ENCODE measurements at regions of chr3 and their contacts with region 1.

Region 1: DNA sequence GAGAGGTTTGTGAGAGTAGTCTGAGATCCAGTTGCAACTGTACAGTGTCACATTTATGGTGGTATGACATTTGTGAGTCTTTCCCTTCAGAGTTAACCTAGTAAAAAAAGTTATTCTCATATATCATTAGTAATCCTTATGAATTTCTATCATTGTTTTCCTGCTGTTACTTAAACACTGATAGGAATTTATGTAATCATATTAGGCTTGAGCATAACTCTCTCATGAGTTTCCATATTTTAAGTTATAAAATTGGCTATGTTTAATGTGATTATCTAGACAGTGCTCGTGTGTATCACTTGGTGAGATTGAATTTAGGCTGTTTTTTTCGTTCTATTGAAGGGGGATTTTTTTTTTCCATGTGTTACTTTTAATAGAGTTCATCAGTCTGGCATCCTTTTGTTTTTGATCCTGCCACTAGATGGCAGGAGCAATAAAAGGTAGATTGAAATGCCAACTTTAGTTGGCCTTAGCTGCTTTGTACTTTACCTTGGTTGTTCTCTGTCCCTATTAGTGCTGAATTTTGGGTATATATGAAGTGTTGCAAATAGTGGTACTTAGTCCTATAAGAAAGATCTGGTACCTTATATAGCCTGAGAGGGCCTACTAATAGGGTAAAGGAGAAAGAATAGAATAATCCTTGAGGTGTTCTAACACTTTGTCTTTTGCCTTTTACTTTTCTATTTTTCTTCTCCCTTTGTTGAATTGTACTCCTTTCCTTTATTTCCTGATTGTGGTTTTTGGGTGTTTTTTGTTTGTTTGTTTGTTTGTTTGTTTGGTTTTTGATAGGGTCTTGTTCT is 17.9 kb downstream of the STT3B start:
- DNase-seq: peak; percentile 35
- ATAC-seq: peak; percentile 73
- H3K4me3 Mint-ChIP-seq: no peak overlapping the region
- H3K27ac Mint-ChIP-seq: peak overlapping the region; percentile 46
- H3K4me1 Mint-ChIP-seq: peaks cover 74% of the 10 kb centered on the region
- H3K27me3 Mint-ChIP-seq: no peaks in the 10 kb centered on the region
- CTCF ChIP-seq: peak; percentile 87

Region 2: GRCh38 chr3:31495971-31496665 is 54.5 kb before region 1 on chr3:
- CTCF ChIA-PET with region 1: no interaction called
- POLR2A ChIA-PET with region 1: no interaction called
- intact Hi-C with region 1: no loop called
- DNase-seq: no peak
- ATAC-seq: no peak
- H3K4me3 Mint-ChIP-seq: no peak overlapping the region
- H3K27ac Mint-ChIP-seq: no peak overlapping the region
- H3K4me1 Mint-ChIP-seq: no peaks in the 10 kb centered on the region
- H3K27me3 Mint-ChIP-seq: no peaks in the 10 kb centered on the region
- CTCF ChIP-seq: no peak

Region 3: DNA sequence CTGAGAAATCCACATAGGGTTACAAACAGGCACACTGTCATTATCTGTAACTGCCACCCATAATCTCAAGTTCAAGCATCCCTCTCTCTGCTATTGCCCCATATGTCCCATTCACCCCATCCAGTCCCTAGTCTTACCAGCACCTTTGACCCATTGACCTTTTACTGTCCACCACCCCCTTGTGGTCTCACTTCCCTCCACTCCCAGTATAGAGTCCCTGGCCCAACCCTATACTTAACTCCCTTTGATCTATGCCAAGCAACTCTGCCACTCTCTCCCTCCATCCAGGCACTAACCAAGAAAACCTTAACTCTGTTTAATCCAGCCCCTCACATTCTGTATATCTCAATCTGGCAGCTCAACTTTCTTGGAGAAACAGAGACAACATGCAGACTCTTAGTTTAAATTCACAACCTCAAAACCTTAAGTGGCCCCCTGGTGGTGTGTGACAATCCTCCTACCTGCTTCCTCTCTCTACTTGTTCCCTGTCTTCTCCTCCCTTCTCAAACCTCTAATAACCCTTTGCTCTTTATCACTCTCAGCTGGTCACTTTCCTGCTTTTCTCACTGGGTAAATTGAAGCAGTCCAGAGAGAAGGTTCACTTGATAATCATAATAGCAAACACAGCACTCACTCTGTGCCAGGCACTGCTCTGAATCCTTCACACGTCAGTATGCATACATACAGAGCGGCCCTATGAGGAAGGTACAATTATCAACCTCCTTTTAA is 144.8 kb after region 1 on chr3:
- CTCF ChIA-PET with region 1: interaction called, 3 read pairs
- POLR2A ChIA-PET with region 1: no interaction called
- intact Hi-C with region 1: loop called (anchors 10 kb)
- DNase-seq: peak; percentile 62
- ATAC-seq: no peak
- H3K4me3 Mint-ChIP-seq: no peak overlapping the region
- H3K27ac Mint-ChIP-seq: no peak overlapping the region
- H3K4me1 Mint-ChIP-seq: no peaks in the 10 kb centered on the region
- H3K27me3 Mint-ChIP-seq: no peaks in the 10 kb centered on the region
- CTCF ChIP-seq: no peak